Cardiac septum (tissue), 1 donor: ENCODE measurements at regions of chr2 and their contacts with region 1.

Region 1: GRCh38 chr2:147806846-147807245 is 38.0 kb upstream of the ACVR2A start:
- DNase-seq: no peak

Region 2: GRCh38 chr2:146209842-146210275 is 1597.0 kb before region 1 on chr2:
- intact Hi-C with region 1: no loop called
- DNase-seq: no peak

Region 3: GRCh38 chr2:146908776-146909175 is 898.1 kb before region 1 on chr2:
- intact Hi-C with region 1: no loop called
- DNase-seq: no peak

Region 4: DNA sequence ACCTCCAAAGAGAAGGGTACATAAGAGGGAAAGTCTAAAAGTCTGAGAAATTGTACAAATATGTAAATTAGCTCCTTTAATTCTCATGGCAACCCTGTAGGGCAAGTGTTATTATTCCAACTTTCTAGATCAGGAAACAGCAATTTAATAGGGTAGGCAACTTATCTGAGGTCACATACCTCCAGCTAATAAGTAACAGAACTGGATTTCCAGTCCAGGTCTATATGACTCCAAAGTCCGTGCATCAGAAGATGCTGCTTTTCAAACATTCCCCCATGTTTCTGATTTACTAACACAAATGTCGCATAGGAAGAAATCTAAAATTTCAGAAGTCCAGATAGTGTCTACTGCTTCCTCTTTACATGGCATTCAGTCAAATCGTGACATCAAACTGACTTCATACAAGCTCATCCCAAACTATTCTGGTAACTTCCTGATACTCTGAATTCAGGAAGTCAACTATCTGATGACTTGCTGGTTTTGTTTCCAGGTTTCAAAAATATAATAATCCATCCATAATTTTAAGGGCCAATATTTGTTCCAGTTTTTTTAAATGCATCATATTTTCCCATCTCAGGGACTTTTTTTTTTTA is 381.3 kb before region 1 on chr2:
- intact Hi-C with region 1: loop called (anchors 10 kb)
- DNase-seq: no peak

Region 5: DNA sequence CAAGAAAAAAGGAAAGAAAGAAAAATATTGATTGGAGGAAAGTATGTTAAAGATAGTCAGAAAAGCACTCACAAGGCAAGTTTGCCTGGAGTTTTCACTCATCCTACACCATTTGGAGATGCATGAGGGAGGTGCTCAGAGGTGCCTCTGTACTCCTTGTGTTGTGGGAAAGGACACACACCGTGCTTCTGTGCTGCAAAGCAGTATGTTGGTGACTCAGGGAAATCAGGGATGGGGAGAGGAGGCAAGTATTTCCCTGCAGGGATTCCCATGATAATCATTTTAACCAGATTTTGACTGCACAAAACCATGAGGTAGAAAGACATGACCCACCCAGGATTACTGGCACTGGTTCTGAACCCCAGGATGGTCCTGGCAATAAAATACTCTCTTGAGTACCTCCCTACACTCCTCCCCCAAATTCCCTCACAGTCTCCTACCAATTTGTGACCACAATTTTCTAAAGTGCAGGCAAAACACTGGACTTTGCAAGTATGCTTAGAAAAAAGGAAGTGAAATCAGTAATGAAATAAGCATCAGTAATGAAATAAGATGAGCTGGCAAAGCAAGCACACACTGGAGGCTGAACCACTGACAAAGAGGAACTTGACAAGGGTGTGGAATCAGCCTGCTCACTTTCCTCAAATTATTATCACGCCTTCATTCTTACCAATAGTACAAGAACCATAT is 117.5 kb before region 1 on chr2:
- intact Hi-C with region 1: no loop called
- DNase-seq: no peak

Region 6: DNA sequence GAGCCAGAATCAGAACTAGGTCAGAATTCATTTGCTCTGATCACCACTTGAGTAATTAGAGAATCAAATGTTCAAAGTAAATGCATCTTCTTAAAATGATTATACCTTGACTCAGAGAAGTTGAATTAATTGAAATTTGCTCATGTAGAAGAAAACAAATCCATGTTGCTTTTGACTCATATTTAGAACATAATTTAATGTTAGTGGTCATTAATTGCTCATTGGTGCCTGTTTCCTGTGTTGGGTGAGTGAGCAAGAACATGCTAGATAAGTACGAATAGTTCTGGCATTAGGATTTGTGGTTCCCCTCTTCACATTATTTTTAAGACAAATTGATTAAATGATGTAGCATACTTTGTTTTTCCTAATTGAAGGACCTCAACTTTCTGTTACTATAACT is 57.0 kb after region 1 on chr2:
- intact Hi-C with region 1: no loop called
- DNase-seq: no peak